Breast epithelium (tissue), 4 donors: ENCODE measurements at regions of chr20 and their contacts with region 1.

Region 1: GRCh38 chr20:43046966-43047365 is 142.7 kb downstream of the PTPRT start:
- DNase-seq: no peak
- H3K4me3 ChIP-seq: no peak overlapping the region
- H3K27ac ChIP-seq: no peak overlapping the region
- H3K4me1 ChIP-seq: no peaks in the 10 kb centered on the region
- H3K27me3 ChIP-seq: peaks cover 0 to under 1% of the 10 kb centered on the region in 2 donors
- CTCF ChIP-seq: no peak
- POLR2A ChIP-seq: no peak

Region 2: DNA sequence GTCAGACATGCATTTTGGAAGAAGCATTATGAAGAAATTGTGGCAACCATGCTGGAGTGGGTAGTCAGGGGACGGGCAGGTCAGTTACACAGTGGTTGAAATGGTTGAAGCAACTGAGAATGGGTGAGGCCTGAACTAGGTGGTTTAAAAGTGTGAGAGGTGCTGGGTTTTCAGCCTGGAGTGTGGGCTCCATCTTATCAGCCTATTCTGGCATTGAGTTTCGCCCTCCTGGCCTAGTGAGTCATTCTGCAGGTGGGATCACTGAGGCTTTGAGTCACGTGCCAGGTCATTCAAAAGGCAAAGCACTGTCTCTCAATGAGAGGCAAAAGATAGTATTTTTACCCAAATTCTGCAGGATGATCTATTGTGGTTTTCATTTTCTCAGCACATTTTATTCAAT is 1246.9 kb before region 1 on chr20:
- intact Hi-C with region 1: loop called (anchors 5 kb)
- DNase-seq: no peak
- H3K4me3 ChIP-seq: no peak overlapping the region
- H3K27ac ChIP-seq: no peak overlapping the region
- H3K4me1 ChIP-seq: no peaks in the 10 kb centered on the region
- H3K27me3 ChIP-seq: no peaks in the 10 kb centered on the region
- CTCF ChIP-seq: no peak
- POLR2A ChIP-seq: no peak

Region 3: DNA sequence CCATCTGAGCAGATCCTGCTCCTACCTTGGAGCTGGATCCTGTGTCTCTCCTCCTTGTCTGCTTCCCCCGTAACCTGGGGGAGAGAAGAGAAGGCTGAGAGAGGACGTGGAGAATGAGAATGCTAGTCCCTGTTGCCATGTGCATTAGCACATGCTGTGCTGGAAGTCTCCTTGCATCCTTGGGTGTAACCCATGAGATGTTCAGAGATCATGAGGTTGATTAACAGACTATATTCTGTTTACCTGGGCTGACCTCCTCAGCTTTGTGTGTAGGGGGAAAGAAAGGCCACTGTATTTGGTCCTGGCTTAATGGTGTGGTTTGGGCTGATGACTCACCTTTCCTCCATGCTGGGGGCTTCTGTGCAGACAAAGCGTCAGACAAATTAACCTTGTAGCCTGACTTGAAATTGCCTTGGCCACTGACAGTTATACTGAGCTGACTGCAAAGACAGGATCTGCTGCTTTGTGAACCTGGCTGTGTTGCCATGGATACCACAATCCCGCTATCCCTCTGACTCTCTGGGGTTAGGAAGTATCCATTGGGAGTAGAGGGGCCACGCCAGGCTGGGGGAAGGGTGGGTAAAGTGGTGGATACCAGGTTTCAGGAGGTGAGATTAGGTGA is 1185.1 kb before region 1 on chr20:
- intact Hi-C with region 1: loop called (anchors 5 kb)
- DNase-seq: no peak
- H3K4me3 ChIP-seq: no peak overlapping the region
- H3K27ac ChIP-seq: no peak overlapping the region
- H3K4me1 ChIP-seq: no peaks in the 10 kb centered on the region
- H3K27me3 ChIP-seq: no peaks in the 10 kb centered on the region
- CTCF ChIP-seq: no peak
- POLR2A ChIP-seq: no peak

Region 4: GRCh38 chr20:43397147-43397546 is 350.2 kb after region 1 on chr20:
- intact Hi-C with region 1: no loop called
- DNase-seq: no peak
- H3K4me3 ChIP-seq: no peak overlapping the region
- H3K27ac ChIP-seq: no peak overlapping the region
- H3K4me1 ChIP-seq: no peaks in the 10 kb centered on the region
- H3K27me3 ChIP-seq: no peaks in the 10 kb centered on the region
- CTCF ChIP-seq: no peak
- POLR2A ChIP-seq: no peak